ENCODE measurements at regions of chr21 and their contacts with region 1.

Region 1: GRCh38 chr21:36310016-36310415 is 10.0 kb upstream of the MORC3 start:
- DNase-seq: no peak
- H3K4me3 Mint-ChIP-seq: no peak overlapping the region
- H3K27ac Mint-ChIP-seq: no peak overlapping the region
- H3K4me1 Mint-ChIP-seq: peaks cover 3% of the 10 kb centered on the region
- H3K27me3 Mint-ChIP-seq: no peaks in the 10 kb centered on the region

Region 2: GRCh38 chr21:36288651-36289243 is 21.3 kb before region 1 on chr21:
- intact Hi-C with region 1: loop called (anchors 1 kb)
- DNase-seq: no peak
- H3K4me3 Mint-ChIP-seq: peak overlapping the region; percentile 34
- H3K27ac Mint-ChIP-seq: peak overlapping the region; percentile 87
- H3K4me1 Mint-ChIP-seq: peaks cover 19% of the 10 kb centered on the region
- H3K27me3 Mint-ChIP-seq: no peaks in the 10 kb centered on the region